Testis (tissue), 5 donors: ENCODE measurements at regions of chr10 and their contacts with region 1.

Region 1: DNA sequence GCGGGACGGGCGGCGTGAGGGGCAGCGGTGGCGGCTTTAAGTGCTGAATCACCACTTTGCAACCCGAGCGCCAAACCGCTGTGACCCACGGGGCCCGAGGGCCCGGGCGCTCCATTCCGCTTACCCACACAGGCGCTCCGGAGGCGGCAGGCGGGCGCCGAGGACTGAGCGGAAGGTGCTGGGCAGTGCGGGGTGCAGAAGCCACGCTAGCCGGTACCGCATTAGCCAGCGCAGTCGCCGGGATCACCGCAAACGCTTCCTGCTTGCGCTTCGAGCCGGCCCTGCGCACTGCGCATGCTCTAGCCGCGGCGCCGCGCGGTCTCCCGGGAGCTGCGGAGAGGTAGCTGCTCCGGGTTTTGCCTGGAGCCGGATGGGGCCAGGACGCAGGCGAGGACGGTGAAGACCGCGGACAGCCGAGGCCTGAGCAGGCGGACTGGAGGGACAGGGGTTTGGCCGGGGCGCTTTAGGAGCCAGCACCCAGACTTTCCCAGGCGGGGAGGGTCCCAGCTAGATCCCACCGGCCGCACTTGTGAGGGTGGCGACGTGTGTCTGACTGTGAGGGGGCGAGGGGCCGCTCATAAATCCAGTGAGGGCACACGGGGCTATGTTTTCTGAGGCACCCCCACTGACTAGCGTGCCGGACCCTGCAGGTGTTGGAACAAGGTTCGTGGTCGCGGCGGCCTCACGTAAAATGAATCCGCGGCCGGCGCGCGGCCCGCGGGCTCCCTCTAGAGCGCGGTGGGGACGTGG is at the start of gene IDE:
- DNase-seq: peak; percentile 89
- H3K4me3 ChIP-seq: peak within 1 kb of the TSS; percentile 92 to 98
- H3K27ac ChIP-seq: peak within 1 kb of the TSS; percentile 85 to 95
- H3K4me1 ChIP-seq: peaks cover 3% of the 10 kb centered on the region
- H3K27me3 ChIP-seq: no peaks in the 10 kb centered on the region
- CTCF ChIP-seq: peak; percentile 32 to 63 (median 61)
- POLR2A ChIP-seq: no peak
- total RNA-seq, gene IDE: 28.4 to 31.1 TPM

Region 2: DNA sequence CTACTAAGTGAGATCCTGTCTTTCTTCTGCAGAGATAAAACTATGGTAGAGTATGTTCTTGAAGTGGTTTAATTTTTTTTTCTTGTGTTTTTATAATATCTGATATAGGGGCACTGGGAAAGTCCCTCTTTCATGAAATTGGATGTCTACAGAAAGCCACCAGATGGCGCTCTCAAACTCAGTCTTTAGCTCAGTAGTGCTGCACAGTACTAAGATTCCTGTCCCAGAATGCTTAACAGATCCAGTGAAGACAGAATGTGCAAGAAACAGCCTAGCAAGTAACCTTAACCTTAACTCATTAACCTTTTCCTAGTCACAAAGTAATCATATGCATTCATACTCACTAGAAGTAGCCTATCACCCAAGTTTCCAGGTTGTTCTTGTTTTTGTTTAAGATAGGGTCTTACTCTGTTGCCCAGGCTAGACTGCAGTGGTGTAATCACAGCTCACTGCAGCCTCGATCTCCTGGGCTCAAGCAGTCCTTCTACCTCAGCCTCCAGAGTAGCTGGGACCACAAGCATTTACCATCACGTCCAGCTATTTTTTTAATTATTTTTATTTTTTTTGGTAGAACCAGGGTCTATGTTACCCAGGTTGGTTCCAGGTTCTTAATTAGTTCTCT is 56.8 kb before region 1 on chr10:
- intact Hi-C with region 1: loop called (anchors 10 kb)
- DNase-seq: peak; percentile 85
- H3K4me3 ChIP-seq: no peak overlapping the region
- H3K27ac ChIP-seq: no peak overlapping the region
- H3K4me1 ChIP-seq: no peaks in the 10 kb centered on the region
- H3K27me3 ChIP-seq: no peaks in the 10 kb centered on the region
- CTCF ChIP-seq: peak; percentile 63 to 76 (median 73)
- POLR2A ChIP-seq: no peak

Region 3: DNA sequence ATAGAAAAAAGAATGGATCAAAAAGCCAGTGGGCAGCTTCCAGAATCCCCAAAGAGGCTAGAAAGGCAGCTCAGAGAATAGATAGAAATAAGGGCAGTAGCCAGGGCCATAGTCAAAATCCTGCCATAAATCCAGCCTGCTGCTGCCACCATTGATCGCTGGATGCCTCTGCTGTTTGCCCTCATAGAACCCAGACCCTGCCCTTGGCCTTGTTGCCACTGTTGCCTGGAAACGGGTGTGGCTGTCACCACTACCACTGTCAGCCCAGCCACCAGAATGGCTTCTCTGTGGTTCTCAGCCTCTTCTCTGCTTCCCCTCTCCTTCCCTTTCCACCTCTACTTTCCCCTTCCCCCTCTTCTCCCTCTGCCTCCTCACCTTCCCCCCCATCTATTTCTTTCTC is 173.6 kb after region 1 on chr10:
- intact Hi-C with region 1: no loop called
- DNase-seq: no peak
- H3K4me3 ChIP-seq: no peak overlapping the region
- H3K27ac ChIP-seq: no peak overlapping the region
- H3K4me1 ChIP-seq: no peaks in the 10 kb centered on the region
- H3K27me3 ChIP-seq: no peaks in the 10 kb centered on the region
- CTCF ChIP-seq: no peak
- POLR2A ChIP-seq: no peak

Region 4: DNA sequence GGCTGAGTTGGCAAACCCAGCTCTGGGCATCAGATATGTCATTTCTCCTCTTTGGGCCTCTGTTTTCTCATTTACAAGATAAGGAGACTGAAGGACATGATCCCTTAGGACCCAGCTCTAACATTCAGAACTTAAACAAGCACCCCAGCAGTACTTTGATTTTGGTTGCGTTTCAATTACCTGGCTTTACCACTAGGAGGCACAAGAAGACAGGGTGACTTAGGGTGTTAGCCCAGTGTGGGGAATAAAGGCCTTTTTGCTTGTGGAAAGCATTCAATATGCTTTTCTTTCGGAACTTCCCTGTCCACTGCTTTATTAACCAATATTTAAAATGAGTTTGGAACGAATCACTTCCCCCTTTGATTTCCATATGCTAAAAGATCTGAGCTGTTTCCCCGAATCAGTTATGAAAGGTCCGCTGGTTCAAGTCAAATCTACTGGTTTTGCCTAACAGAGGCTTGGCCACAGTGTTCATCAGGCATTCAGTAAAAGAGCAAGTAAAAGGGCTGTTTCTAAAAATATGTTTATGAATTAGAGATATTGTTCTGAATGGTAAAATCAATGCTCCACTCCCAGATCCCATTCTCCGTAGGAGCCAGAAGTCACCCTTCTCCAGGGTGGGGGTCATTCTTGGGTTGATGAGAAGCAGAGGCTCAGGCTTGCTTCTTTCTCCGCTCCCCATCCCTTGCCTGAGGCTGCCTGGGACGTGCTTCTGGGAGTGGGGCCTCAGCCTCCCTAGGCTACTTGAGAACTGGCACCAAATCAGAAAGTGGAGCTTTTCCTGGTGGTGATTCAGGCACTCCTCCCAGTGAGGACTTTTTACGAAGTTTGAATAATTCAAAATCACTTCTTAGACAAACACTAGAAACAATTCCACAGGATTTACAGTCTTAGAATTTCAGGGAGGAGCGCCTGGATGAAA is 802.7 kb after region 1 on chr10:
- intact Hi-C with region 1: no loop called
- DNase-seq: peak; percentile 47
- H3K4me3 ChIP-seq: no peak overlapping the region
- H3K27ac ChIP-seq: peak overlapping the region; percentile 62 to 78
- H3K4me1 ChIP-seq: peaks cover 5% of the 10 kb centered on the region
- H3K27me3 ChIP-seq: no peaks in the 10 kb centered on the region
- CTCF ChIP-seq: peak; percentile 90 to 95 (median 94)
- POLR2A ChIP-seq: no peak